ENCODE measurements at regions of chr19 and their contacts with region 1.

Region 1: GRCh38 chr19:11798391-11799330 is at the start of gene ZNF491:
- DNase-seq: peak; percentile 66 to 84 (median 79)
- ATAC-seq: peak; percentile 98
- H3K4me3 ChIP-seq: peak within 1 kb of the TSS; percentile 71
- H3K4me3 Mint-ChIP-seq: peak within 1 kb of the TSS; percentile 82 to 95 (median 92)
- H3K27ac ChIP-seq: peak within 1 kb of the TSS; percentile 82
- H3K27ac Mint-ChIP-seq: peak within 1 kb of the TSS; percentile 45 to 94 (median 91)
- H3K4me1 ChIP-seq: peaks cover 8 to 12% of the 10 kb centered on the region in 2 donors
- H3K4me1 Mint-ChIP-seq: peaks cover 12 to 29% (median 20%) of the 10 kb centered on the region in 7 donors
- H3K27me3 ChIP-seq: no peaks in the 10 kb centered on the region
- H3K27me3 Mint-ChIP-seq: no peaks in the 10 kb centered on the region
- total RNA-seq, gene ZNF491: 0.92 to 6.1 (median 1.9) TPM

Region 2: GRCh38 chr19:11519138-11519537 is 279.5 kb before region 1 on chr19:
- CTCF ChIA-PET with region 1: no interaction called
- POLR2A ChIA-PET with region 1: no interaction called
- intact Hi-C with region 1: no loop called
- DNase-seq: no peak
- ATAC-seq: no peak
- H3K4me3 ChIP-seq: no peak overlapping the region
- H3K4me3 Mint-ChIP-seq: no peak overlapping the region
- H3K27ac ChIP-seq: no peak overlapping the region
- H3K27ac Mint-ChIP-seq: no peak overlapping the region
- H3K4me1 ChIP-seq: no peaks in the 10 kb centered on the region
- H3K4me1 Mint-ChIP-seq: peaks cover 0 to 8% (median 5%) of the 10 kb centered on the region in 7 donors
- H3K27me3 ChIP-seq: no peaks in the 10 kb centered on the region
- H3K27me3 Mint-ChIP-seq: no peaks in the 10 kb centered on the region

Region 3: GRCh38 chr19:11766597-11767591 is 31.8 kb before region 1 on chr19 and contains the start of gene ZNF441:
- CTCF ChIA-PET with region 1: interaction called, 3 read pairs
- POLR2A ChIA-PET with region 1: interaction called, 6 read pairs
- intact Hi-C with region 1: loop called in 1 of 2 experiments (anchors 1 kb)
- DNase-seq: peak; percentile 76 to 89 (median 87)
- ATAC-seq: peak; percentile 98
- H3K4me3 ChIP-seq: peak within 1 kb of the TSS; percentile 70
- H3K4me3 Mint-ChIP-seq: peak within 1 kb of the TSS; percentile 94 to 99 (median 96)
- H3K27ac ChIP-seq: peak within 1 kb of the TSS; percentile 79
- H3K27ac Mint-ChIP-seq: peak within 1 kb of the TSS; percentile 90 to 98 (median 95)
- H3K4me1 ChIP-seq: peaks cover 4 to 7% of the 10 kb centered on the region in 2 donors
- H3K4me1 Mint-ChIP-seq: peaks cover 15 to 31% (median 27%) of the 10 kb centered on the region in 7 donors
- H3K27me3 ChIP-seq: no peaks in the 10 kb centered on the region
- H3K27me3 Mint-ChIP-seq: peaks cover 0 to 23% (median 5%) of the 10 kb centered on the region in 5 donors
- total RNA-seq, gene ZNF441: 3.9 to 23.8 (median 7.1) TPM

Region 4: GRCh38 chr19:11848594-11849469 is 50.2 kb after region 1 on chr19 and contains the start of gene ZNF439:
- CTCF ChIA-PET with region 1: interaction called, 4 read pairs
- POLR2A ChIA-PET with region 1: interaction called, 4 read pairs
- intact Hi-C with region 1: loop called in 1 of 2 experiments (anchors 1 kb)
- DNase-seq: peak; percentile 74 to 93 (median 86)
- ATAC-seq: peak; percentile 100
- H3K4me3 ChIP-seq: peak within 1 kb of the TSS; percentile 88
- H3K4me3 Mint-ChIP-seq: peak within 1 kb of the TSS; percentile 88 to 93 (median 91)
- H3K27ac ChIP-seq: peak within 1 kb of the TSS; percentile 66
- H3K27ac Mint-ChIP-seq: peak within 1 kb of the TSS; percentile 81 to 96 (median 90)
- H3K4me1 ChIP-seq: peaks cover 0 to 15% of the 10 kb centered on the region in 2 donors
- H3K4me1 Mint-ChIP-seq: peaks cover 13 to 42% (median 24%) of the 10 kb centered on the region in 7 donors
- H3K27me3 ChIP-seq: no peaks in the 10 kb centered on the region
- H3K27me3 Mint-ChIP-seq: no peaks in the 10 kb centered on the region
- total RNA-seq, gene ZNF439: 5.6 to 22.5 (median 14.1) TPM

Region 5: GRCh38 chr19:11964858-11965645 is 166.4 kb after region 1 on chr19 and contains the start of gene ZNF763:
- CTCF ChIA-PET with region 1: interaction called, 3 read pairs
- POLR2A ChIA-PET with region 1: interaction called, 11 read pairs
- intact Hi-C with region 1: loop called in 1 of 2 experiments (anchors 1 kb)
- DNase-seq: peak; percentile 70 to 86 (median 83)
- ATAC-seq: peak; percentile 95
- H3K4me3 ChIP-seq: peak within 1 kb of the TSS; percentile 90
- H3K4me3 Mint-ChIP-seq: peak within 1 kb of the TSS; percentile 87 to 99 (median 94)
- H3K27ac ChIP-seq: peak within 1 kb of the TSS; percentile 88
- H3K27ac Mint-ChIP-seq: peak within 1 kb of the TSS; percentile 89 to 97 (median 94)
- H3K4me1 ChIP-seq: peaks cover 8 to 10% of the 10 kb centered on the region in 2 donors
- H3K4me1 Mint-ChIP-seq: peaks cover 21 to 34% (median 27%) of the 10 kb centered on the region in 7 donors
- H3K27me3 ChIP-seq: no peaks in the 10 kb centered on the region
- H3K27me3 Mint-ChIP-seq: no peaks in the 10 kb centered on the region
- total RNA-seq, gene ZNF763: 1.3 to 17.3 (median 4.4) TPM

Region 6: GRCh38 chr19:11978492-11979100 is 179.9 kb after region 1 on chr19:
- CTCF ChIA-PET with region 1: no interaction called
- POLR2A ChIA-PET with region 1: no interaction called
- intact Hi-C with region 1: no loop called
- DNase-seq: no peak
- ATAC-seq: no peak
- H3K4me3 ChIP-seq: no peak overlapping the region
- H3K4me3 Mint-ChIP-seq: no peak overlapping the region
- H3K27ac ChIP-seq: no peak overlapping the region
- H3K27ac Mint-ChIP-seq: no peak overlapping the region
- H3K4me1 ChIP-seq: no peaks in the 10 kb centered on the region
- H3K4me1 Mint-ChIP-seq: peaks cover 0 to 4% (median 0%) of the 10 kb centered on the region in 7 donors
- H3K27me3 ChIP-seq: no peaks in the 10 kb centered on the region
- H3K27me3 Mint-ChIP-seq: no peaks in the 10 kb centered on the region

Region 7: DNA sequence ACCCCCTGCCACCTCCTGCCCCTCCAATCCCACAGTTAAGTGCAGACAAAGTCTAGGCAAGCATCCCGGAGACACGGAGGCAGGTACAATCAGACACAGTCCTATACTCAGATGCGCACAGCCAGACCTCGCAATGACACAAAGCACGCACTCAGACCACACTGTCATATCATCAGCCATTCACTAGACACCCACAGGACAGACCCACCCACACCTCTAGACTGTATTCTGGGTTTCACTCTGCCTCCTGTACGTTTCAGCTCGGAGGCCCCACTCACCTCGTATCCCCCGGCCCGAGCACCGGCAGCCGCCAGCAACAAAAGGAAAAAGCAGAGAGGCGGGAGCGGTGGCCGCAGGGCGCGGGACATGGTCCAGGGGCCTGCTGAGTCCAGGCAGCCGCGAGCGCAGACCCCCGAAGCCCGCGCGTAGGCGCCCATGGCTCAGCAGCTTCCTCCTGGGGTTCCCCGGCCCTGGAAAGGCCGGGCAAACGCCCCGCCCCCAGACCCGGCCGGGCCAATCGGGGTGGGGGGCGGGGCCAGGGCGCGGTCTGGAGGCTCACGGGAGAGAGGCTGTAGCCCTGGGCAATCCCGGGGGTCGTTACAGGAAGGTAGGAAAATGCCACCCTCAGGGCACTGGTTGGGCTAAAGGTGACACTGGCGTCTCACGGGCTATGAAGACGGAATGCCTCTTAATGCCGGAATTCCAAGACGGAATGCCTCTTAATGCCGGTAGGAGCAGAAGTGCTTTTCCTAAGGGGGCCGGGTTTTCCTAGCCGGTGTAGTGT is 867.8 kb after region 1 on chr19 and contains the starts of genes MAN2B1 and WDR83:
- CTCF ChIA-PET with region 1: no interaction called
- POLR2A ChIA-PET with region 1: no interaction called
- intact Hi-C with region 1: loop called in 1 of 2 experiments (anchors 10 kb)
- DNase-seq: peak; percentile 56 to 86 (median 72)
- ATAC-seq: peak; percentile 82
- H3K4me3 ChIP-seq: peak within 1 kb of the TSS; percentile 92
- H3K4me3 Mint-ChIP-seq: peak within 1 kb of the TSS; percentile 90 to 100 (median 98)
- H3K27ac ChIP-seq: peak within 1 kb of the TSS; percentile 99
- H3K27ac Mint-ChIP-seq: peak within 1 kb of the TSS; percentile 77 to 100 (median 91)
- H3K4me1 ChIP-seq: peaks cover 38% of the 10 kb centered on the region in 2 donors
- H3K4me1 Mint-ChIP-seq: peaks cover 22 to 69% (median 45%) of the 10 kb centered on the region in 7 donors
- H3K27me3 ChIP-seq: no peaks in the 10 kb centered on the region
- H3K27me3 Mint-ChIP-seq: no peaks in the 10 kb centered on the region
- total RNA-seq, gene MAN2B1: 105 to 215 (median 138) TPM
- total RNA-seq, gene WDR83: 7.8 to 18.6 (median 14.7) TPM